ENCODE measurements at regions of chr11 and their contacts with region 1.

Region 1: DNA sequence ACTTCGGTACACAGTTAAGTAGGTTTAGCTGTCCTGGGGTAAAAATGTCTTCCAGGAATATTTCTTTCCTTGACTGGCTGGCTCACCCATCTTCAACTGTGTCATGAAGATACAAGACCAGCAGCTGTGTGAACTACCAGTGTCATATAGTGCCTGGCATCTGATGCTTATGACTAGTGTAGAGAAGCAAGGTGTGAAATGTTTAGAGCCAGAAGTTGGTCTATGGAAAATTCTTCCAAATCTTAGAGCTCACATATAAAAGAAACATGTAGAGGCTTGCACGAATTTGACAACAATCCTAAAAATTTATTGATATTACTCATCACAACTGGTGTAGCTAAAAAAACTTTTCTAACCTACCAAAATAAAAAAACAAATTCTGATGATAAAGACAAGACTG is 54.4 kb downstream of the ARL14EP start:
- DNase-seq: no peak
- H3K4me3 ChIP-seq: no peak overlapping the region
- H3K27ac ChIP-seq: no peak overlapping the region
- H3K4me1 ChIP-seq: no peaks in the 10 kb centered on the region
- H3K27me3 ChIP-seq: peaks cover 82% of the 10 kb centered on the region
- CTCF ChIP-seq: no peak

Region 2: DNA sequence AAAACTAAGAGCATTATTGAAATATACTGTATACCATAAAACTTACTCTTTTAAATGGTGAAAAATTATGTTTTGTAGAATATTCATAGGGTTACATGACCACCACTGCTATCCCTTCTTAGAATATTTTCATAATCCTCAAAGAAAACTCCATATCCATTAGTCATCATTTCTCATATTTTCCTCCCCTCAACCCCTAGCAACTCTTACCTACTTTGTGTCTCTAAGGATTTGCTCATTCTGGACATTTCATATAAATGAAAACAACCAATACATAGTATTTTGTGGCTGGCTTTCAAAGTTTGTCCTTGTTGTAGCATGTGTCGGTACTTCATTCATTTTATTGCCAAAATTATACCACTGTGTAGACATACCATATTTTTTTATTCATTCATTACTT is 1224.3 kb before region 1 on chr11:
- CTCF ChIA-PET with region 1: no interaction called
- POLR2A ChIA-PET with region 1: no interaction called
- intact Hi-C with region 1: no loop called
- DNase-seq: no peak
- H3K4me3 ChIP-seq: no peak overlapping the region
- H3K27ac ChIP-seq: no peak overlapping the region
- H3K4me1 ChIP-seq: no peaks in the 10 kb centered on the region
- H3K27me3 ChIP-seq: no peaks in the 10 kb centered on the region
- CTCF ChIP-seq: no peak

Region 3: GRCh38 chr11:29656597-29656996 is 720.8 kb before region 1 on chr11:
- CTCF ChIA-PET with region 1: interaction called, 12 read pairs
- POLR2A ChIA-PET with region 1: no interaction called
- intact Hi-C with region 1: no loop called
- DNase-seq: no peak
- H3K4me3 ChIP-seq: no peak overlapping the region
- H3K27ac ChIP-seq: no peak overlapping the region
- H3K4me1 ChIP-seq: no peaks in the 10 kb centered on the region
- H3K27me3 ChIP-seq: no peaks in the 10 kb centered on the region
- CTCF ChIP-seq: no peak

Region 4: GRCh38 chr11:31542862-31543261 is 1165.5 kb after region 1 on chr11:
- CTCF ChIA-PET with region 1: no interaction called
- POLR2A ChIA-PET with region 1: interaction called, 10 read pairs
- intact Hi-C with region 1: no loop called
- DNase-seq: no peak
- H3K4me3 ChIP-seq: no peak overlapping the region
- H3K27ac ChIP-seq: no peak overlapping the region
- H3K4me1 ChIP-seq: no peaks in the 10 kb centered on the region
- H3K27me3 ChIP-seq: no peaks in the 10 kb centered on the region
- CTCF ChIP-seq: no peak

Measured in PC-9 (cell line).